ENCODE measurements at regions of chr5 and their contacts with region 1.

Region 1: GRCh38 chr5:83718195-83718825 is 2.3 kb downstream of the HAPLN1 start:
- DNase-seq: no peak
- H3K4me3 ChIP-seq: no peak overlapping the region
- H3K27ac ChIP-seq: no peak overlapping the region
- H3K4me1 ChIP-seq: no peaks in the 10 kb centered on the region
- H3K27me3 ChIP-seq: no peaks in the 10 kb centered on the region
- CTCF ChIP-seq: peak; percentile 22 to 67 (median 59)
- POLR2A ChIP-seq: no peak

Region 2: GRCh38 chr5:84362061-84362720 is 643.9 kb after region 1 on chr5:
- intact Hi-C with region 1: loop called (anchors 5 kb)
- DNase-seq: no peak
- H3K4me3 ChIP-seq: no peak overlapping the region
- H3K27ac ChIP-seq: no peak overlapping the region
- H3K4me1 ChIP-seq: no peaks in the 10 kb centered on the region
- H3K27me3 ChIP-seq: no peaks in the 10 kb centered on the region
- CTCF ChIP-seq: no peak
- POLR2A ChIP-seq: no peak